ENCODE measurements at regions of chr2 and their contacts with region 1.

Region 1: DNA sequence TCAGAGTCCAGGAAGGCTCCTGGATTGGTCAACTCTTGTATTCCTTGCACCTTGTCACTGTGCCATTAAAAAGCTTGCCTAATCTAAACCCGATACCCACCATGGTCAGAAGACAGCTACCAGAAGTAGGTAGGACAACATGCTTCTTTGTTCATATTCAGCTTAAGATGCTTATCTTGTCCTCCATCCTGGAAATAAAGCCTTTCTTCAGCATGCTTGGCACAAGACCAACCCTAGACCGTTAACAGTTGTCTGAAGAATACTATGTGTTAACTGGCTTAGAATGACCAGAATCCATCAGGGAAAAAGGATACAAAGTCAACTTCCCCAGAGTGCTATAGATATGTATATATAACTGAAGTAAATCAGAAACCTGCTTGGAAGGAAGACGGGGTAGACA is 193.9 kb downstream of the ZRANB3 start:
- DNase-seq: no peak
- H3K4me3 Mint-ChIP-seq: no peak overlapping the region
- H3K27ac Mint-ChIP-seq: no peak overlapping the region
- H3K4me1 Mint-ChIP-seq: no peaks in the 10 kb centered on the region
- H3K27me3 Mint-ChIP-seq: no peaks in the 10 kb centered on the region

Region 2: GRCh38 chr2:135299656-135300244 is 37.3 kb before region 1 on chr2:
- intact Hi-C with region 1: loop called (anchors 1 kb)
- DNase-seq: no peak
- H3K4me3 Mint-ChIP-seq: no peak overlapping the region
- H3K27ac Mint-ChIP-seq: no peak overlapping the region
- H3K4me1 Mint-ChIP-seq: peaks cover 8% of the 10 kb centered on the region
- H3K27me3 Mint-ChIP-seq: no peaks in the 10 kb centered on the region

Measured in activated T-helper 2 cell treated with anti-CD3 and anti-CD28 coated beads, Interferon-gamma antibody, Interleukin-2, Interleukin-4, amounts not matched to agents 10 μg/mL and 5 μg/mL and 100 μg/mL, durations not matched to agents 14 hours and 24 hours and 36 hours (primary cell).